Activated CD8-positive, alpha-beta T cell treated with anti-CD3 and anti-CD28 coated beads for 36 hours (primary cell): ENCODE measurements at regions of chr22 and their contacts with region 1.

Region 1: DNA sequence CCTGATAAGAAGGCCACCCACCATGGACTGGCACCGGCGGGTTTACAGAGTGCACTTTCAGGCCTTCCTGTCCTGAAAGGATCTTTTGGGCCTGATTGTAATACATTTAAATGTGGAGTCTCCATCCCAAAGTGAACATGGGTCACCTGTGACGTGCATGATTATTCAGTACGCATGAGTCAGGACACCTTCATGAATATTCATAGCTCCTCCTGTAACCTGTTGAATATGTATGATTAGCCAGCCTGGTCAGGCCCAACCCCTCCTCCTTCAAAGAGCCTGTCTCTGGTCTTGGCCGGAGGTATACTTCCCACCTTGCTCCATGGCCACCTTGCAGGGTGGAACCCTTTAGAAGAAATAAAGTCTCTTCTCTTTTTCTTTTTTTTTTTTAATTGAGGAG is 75.9 kb upstream of the NUP50 start:
- DNase-seq: no peak
- ATAC-seq: no peak
- H3K4me3 Mint-ChIP-seq: no peak overlapping the region
- H3K27ac Mint-ChIP-seq: no peak overlapping the region
- H3K4me1 Mint-ChIP-seq: peaks cover 9% of the 10 kb centered on the region
- H3K27me3 Mint-ChIP-seq: peaks cover 14% of the 10 kb centered on the region
- CTCF ChIP-seq: no peak

Region 2: GRCh38 chr22:44819971-44820631 is 267.7 kb before region 1 on chr22:
- CTCF ChIA-PET with region 1: no interaction called
- POLR2A ChIA-PET with region 1: no interaction called
- intact Hi-C with region 1: loop called (anchors 5 kb)
- DNase-seq: no peak
- ATAC-seq: no peak
- H3K4me3 Mint-ChIP-seq: no peak overlapping the region
- H3K27ac Mint-ChIP-seq: no peak overlapping the region
- H3K4me1 Mint-ChIP-seq: no peaks in the 10 kb centered on the region
- H3K27me3 Mint-ChIP-seq: no peaks in the 10 kb centered on the region
- CTCF ChIP-seq: no peak

Region 3: GRCh38 chr22:45058622-45058912 is 29.2 kb before region 1 on chr22:
- CTCF ChIA-PET with region 1: no interaction called
- POLR2A ChIA-PET with region 1: no interaction called
- intact Hi-C with region 1: no loop called
- DNase-seq: no peak
- ATAC-seq: peak; percentile 24
- H3K4me3 Mint-ChIP-seq: no peak overlapping the region
- H3K27ac Mint-ChIP-seq: no peak overlapping the region
- H3K4me1 Mint-ChIP-seq: peaks cover 9% of the 10 kb centered on the region
- H3K27me3 Mint-ChIP-seq: peaks cover 3% of the 10 kb centered on the region
- CTCF ChIP-seq: no peak

Region 4: GRCh38 chr22:45112136-45112879 is 24.5 kb after region 1 on chr22:
- CTCF ChIA-PET with region 1: no interaction called
- POLR2A ChIA-PET with region 1: no interaction called
- intact Hi-C with region 1: no loop called
- DNase-seq: no peak
- ATAC-seq: no peak
- H3K4me3 Mint-ChIP-seq: no peak overlapping the region
- H3K27ac Mint-ChIP-seq: no peak overlapping the region
- H3K4me1 Mint-ChIP-seq: no peaks in the 10 kb centered on the region
- H3K27me3 Mint-ChIP-seq: peaks cover 2% of the 10 kb centered on the region
- CTCF ChIP-seq: no peak

Region 5: GRCh38 chr22:45212306-45212709 is 124.5 kb after region 1 on chr22:
- CTCF ChIA-PET with region 1: no interaction called
- POLR2A ChIA-PET with region 1: no interaction called
- intact Hi-C with region 1: no loop called
- DNase-seq: no peak
- ATAC-seq: no peak
- H3K4me3 Mint-ChIP-seq: no peak overlapping the region
- H3K27ac Mint-ChIP-seq: no peak overlapping the region
- H3K4me1 Mint-ChIP-seq: peaks cover 5% of the 10 kb centered on the region
- H3K27me3 Mint-ChIP-seq: no peaks in the 10 kb centered on the region
- CTCF ChIP-seq: no peak